ENCODE measurements at regions of chr12 and their contacts with region 1.

Region 1: DNA sequence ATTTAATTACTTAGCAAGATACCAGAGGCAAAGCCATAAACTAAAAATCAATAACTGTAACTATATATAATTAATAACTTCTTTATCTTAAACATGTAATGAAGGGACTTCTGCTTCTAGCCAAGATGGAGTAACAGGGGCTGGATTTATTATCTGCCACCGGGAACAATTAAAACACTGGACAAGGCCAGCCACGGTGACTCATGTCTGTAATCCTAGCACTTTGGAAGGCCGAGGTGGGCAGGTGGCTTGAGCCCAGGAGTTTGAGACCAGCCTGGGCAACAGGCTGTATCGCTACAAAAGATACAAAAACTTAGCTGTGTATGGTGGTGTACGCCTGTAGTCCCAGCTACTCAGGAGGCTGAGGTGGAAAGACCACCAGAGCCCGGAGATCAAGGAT is 113.6 kb downstream of the TAOK3 start:
- DNase-seq: no peak
- H3K4me3 ChIP-seq: no peak overlapping the region
- H3K27ac ChIP-seq: no peak overlapping the region
- H3K4me1 ChIP-seq: no peaks in the 10 kb centered on the region
- H3K27me3 ChIP-seq: no peaks in the 10 kb centered on the region
- CTCF ChIP-seq: no peak
- POLR2A ChIP-seq: no peak

Region 2: DNA sequence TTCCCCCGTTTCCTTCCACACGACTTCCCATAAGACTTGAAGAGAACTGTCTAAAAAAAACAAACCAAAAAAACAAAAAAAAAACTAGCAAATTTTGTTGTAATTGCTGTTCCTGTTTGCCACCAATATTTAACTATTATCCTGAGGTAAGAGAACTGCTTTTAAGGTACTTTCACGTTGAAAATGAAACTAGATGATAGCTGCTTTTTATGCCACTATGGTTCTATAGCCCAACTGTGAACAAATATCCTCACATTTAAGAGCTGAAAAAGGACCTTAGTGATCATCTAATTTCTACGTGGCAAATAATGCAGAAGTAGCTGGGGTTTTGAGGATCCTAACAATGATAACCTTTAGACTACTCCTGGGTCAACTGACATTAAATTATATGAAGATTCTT is 15.0 kb after region 1 on chr12:
- CTCF ChIA-PET with region 1: no interaction called
- POLR2A ChIA-PET with region 1: interaction called, 3 read pairs
- dilution Hi-C with region 1: no loop called
- intact Hi-C with region 1: loop called (anchors 2 kb)
- DNase-seq: no peak
- H3K4me3 ChIP-seq: no peak overlapping the region
- H3K27ac ChIP-seq: no peak overlapping the region
- H3K4me1 ChIP-seq: no peaks in the 10 kb centered on the region
- H3K27me3 ChIP-seq: no peaks in the 10 kb centered on the region
- CTCF ChIP-seq: no peak
- POLR2A ChIP-seq: no peak

Region 3: DNA sequence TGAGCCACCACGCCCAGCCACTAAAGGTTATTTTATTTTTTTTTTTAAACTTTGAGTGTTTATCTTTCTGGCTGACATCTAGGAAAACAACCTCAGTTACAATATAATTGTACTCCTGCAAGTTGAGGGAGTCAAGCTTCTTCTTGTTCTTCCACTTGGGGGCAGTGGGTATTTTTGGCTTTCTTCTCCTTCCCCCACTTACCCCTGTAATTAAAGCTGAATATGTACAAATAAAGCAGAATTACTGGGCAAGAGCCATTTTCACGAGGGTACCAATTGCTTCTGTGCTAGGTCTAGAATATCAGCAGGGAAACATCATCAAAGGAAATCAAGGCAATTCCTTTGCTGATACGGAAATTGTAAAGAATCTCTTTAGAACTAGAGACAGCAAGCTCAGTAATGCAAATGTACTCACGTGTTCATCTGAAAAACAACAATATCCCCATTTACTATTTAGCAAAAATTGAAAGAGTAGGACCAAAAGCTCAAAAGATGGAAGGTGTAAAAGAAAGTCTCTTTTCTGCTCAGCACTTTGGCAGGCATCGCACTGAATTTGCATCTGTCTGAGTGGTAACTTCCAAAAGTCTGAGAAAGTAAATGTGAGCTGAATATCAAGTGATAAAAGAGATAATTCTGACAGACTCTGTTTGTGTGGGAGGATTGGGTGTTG is 40.8 kb after region 1 on chr12:
- CTCF ChIA-PET with region 1: no interaction called
- POLR2A ChIA-PET with region 1: no interaction called
- dilution Hi-C with region 1: no loop called
- intact Hi-C with region 1: loop called (anchors 2 kb)
- DNase-seq: no peak
- H3K4me3 ChIP-seq: no peak overlapping the region
- H3K27ac ChIP-seq: no peak overlapping the region
- H3K4me1 ChIP-seq: peaks cover 6% of the 10 kb centered on the region
- H3K27me3 ChIP-seq: no peaks in the 10 kb centered on the region
- CTCF ChIP-seq: no peak
- POLR2A ChIP-seq: no peak